ENCODE measurements at regions of chr2 and their contacts with region 1.

Region 1: GRCh38 chr2:30208452-30208851 is 22.9 kb upstream of the LBH start:
- DNase-seq: peak; percentile 46
- CTCF ChIP-seq: peak; percentile 82

Region 2: DNA sequence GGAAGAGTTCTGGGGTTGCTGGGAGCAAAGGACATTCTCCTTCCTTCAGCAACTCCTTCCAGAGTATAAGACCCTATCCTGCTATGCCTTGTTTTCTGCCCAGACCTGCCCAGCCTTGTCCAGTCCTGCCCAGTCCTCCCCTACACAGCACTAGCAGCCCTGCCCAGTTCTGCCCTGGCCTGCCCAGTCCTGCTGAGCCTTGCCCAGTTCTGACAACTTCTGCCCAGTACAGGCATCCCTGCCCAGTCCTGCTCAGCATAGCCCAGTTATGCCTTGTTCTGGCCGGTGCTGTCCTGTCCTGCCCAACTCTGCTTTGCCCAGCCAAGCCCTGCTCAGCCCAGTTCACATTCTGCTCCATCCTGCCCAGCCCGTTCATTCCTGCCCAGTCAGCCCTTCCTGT is 242.2 kb before region 1 on chr2:
- CTCF ChIA-PET with region 1: no interaction called
- POLR2A ChIA-PET with region 1: no interaction called
- DNase-seq: no peak
- CTCF ChIP-seq: no peak

Region 3: DNA sequence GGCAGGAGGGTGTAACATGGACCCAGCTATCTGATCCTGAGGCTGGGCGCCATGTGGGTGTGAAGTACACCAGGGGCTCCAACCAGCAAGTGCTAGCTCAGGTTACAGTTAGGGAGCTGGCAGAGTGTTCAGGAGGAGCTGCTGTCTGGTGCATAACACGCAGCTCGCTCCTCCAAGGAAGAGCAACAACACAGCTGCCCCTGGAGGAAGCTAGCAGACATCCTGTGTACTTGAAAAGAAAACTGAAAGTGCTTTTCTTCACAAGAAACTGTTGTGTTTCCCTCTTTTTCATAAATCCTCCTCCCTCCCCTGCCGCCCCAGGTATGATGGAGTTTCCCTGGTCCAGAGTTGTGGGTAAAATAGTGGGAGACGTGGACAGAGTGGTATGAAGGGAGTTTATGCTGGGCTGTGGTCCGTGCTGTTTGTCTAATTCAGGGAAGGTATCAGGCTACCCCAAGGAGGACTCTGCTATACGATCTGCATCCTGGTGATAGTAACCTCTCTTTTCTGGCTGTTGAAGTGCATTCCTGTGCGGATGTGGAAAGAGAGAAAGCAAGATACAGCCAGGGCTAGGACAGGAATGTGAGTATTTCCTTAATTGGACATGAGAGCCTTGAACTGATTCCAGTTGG is 16.8 kb after region 1 on chr2:
- CTCF ChIA-PET with region 1: interaction called, 82 read pairs
- POLR2A ChIA-PET with region 1: no interaction called
- DNase-seq: peak; percentile 55
- CTCF ChIP-seq: no peak

Region 4: GRCh38 chr2:30336978-30337841 is 128.8 kb after region 1 on chr2:
- CTCF ChIA-PET with region 1: interaction called, 16 read pairs
- POLR2A ChIA-PET with region 1: no interaction called
- DNase-seq: peak; percentile 87
- CTCF ChIP-seq: no peak

Region 5: GRCh38 chr2:30691948-30692828 is 483.7 kb after region 1 on chr2:
- CTCF ChIA-PET with region 1: interaction called, 21 read pairs
- POLR2A ChIA-PET with region 1: no interaction called
- DNase-seq: no peak
- CTCF ChIP-seq: peak; percentile 53